OCI-LY7 (cell line): ENCODE measurements at regions of chr1 and their contacts with region 1.

Region 1: GRCh38 chr1:166875734-166876539 is at the start of gene TADA1:
- DNase-seq: peak; percentile 99
- H3K4me3 ChIP-seq: peak within 1 kb of the TSS; percentile 86
- H3K27ac ChIP-seq: peak within 1 kb of the TSS; percentile 69
- H3K4me1 ChIP-seq: peaks cover 17% of the 10 kb centered on the region
- CTCF ChIP-seq: no peak
- total RNA-seq, gene TADA1: 14.9 and 16.9 TPM in 2 replicates

Region 2: DNA sequence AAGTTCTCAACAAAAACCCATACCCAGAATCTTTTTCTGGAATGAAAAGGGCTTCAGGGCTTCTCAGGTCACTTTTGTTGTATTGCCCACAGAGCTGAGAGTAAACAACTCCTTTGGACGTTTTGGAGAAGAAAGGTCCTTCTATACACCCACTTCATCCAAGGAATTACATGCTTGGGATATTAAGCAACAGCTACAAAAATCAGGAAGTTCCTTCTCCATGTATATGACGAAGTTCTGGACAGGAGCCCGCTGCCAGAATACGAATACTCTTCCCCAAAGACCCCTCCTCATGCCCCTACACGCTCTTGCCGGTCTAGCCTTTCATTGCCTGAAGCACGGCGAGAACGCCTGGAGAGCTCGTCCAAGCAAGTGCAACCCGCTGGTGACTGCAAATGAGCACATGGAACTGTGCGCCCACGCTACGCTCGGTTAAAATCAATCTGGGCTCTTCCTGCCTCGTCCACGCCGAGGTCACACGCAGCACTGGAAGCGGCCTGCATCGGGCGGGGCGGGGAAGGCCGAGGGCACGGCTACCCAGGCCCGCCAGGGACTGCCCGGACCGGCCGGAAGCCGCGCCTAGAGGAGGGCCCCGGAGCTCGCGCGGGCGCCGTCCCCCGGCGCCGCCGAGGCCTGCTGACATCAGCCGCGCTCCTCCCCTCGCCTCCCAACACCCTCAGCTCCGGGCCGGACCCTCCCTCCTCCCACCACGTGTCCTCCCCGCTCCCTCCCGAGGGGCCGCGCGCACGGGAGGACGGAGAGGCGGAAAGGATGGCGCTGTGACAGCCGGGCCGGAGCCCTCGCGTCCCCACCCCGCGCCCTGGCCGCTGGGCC is 37.0 kb before region 1 on chr1 and contains the start of gene POGK:
- CTCF ChIA-PET with region 1: no interaction called
- POLR2A ChIA-PET with region 1: interaction called, 8 read pairs
- intact Hi-C with region 1: loop called (anchors 1 kb)
- DNase-seq: peak; percentile 89
- H3K4me3 ChIP-seq: peak within 1 kb of the TSS; percentile 98
- H3K27ac ChIP-seq: peak within 1 kb of the TSS; percentile 62
- H3K4me1 ChIP-seq: peaks cover 25% of the 10 kb centered on the region
- CTCF ChIP-seq: no peak
- total RNA-seq, gene POGK: 27.2 and 33.4 TPM in 2 replicates